Mucosa of descending colon (tissue), 3 donors: ENCODE measurements at regions of chr5 and their contacts with region 1.

Region 1: GRCh38 chr5:115586601-115587048 is 15.7 kb downstream of the TICAM2 start:
- DNase-seq: no peak
- ATAC-seq: peak; percentile 42
- H3K4me3 ChIP-seq: no peak overlapping the region
- H3K4me1 ChIP-seq: no peaks in the 10 kb centered on the region
- CTCF ChIP-seq: no peak

Region 2: DNA sequence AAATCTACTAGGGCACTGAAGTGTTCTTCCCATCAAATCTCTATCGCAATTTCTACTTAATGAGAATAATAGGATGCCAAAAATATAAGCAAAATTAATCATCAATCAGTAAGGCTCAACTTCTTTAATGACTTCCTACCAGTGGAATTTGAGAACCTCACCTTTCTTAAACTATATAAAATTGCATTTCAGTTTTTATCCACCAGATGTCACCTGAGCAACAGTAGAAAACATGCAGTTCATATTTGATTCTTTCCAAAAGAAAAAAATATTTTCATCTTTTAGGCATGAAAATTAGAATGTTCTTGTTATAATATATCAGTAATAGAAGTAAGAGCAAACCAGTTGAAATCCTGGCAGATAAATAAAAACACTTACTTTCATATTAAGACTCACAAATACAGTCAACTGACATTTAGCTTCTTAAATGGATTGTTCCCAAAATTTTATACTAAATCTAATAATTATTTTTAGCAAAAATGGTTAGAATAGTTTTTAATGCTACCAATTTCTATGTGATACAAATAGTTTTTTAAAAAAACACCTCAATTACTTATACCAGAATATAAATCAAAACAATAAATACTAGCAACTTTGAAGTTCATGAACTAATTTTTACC is 276.8 kb before region 1 on chr5:
- intact Hi-C with region 1: loop called in 1 of 2 experiments (anchors 5 kb)
- DNase-seq: no peak
- ATAC-seq: no peak
- H3K4me3 ChIP-seq: no peak overlapping the region
- H3K4me1 ChIP-seq: no peaks in the 10 kb centered on the region
- CTCF ChIP-seq: peak; percentile 24